ENCODE measurements at regions of chr10 and their contacts with region 1.

Region 1: GRCh38 chr10:34637418-34637911 is 177.6 kb downstream of the PARD3 start:
- H3K4me3 ChIP-seq: no peak overlapping the region
- H3K27ac ChIP-seq: no peak overlapping the region
- H3K4me1 ChIP-seq: no peaks in the 10 kb centered on the region
- CTCF ChIP-seq: peak; percentile 54

Region 2: GRCh38 chr10:34522546-34522945 is 114.9 kb before region 1 on chr10:
- CTCF ChIA-PET with region 1: interaction called, 13 read pairs
- POLR2A ChIA-PET with region 1: no interaction called
- H3K4me3 ChIP-seq: no peak overlapping the region
- H3K27ac ChIP-seq: no peak overlapping the region
- H3K4me1 ChIP-seq: peaks cover 10% of the 10 kb centered on the region
- CTCF ChIP-seq: no peak

Region 3: DNA sequence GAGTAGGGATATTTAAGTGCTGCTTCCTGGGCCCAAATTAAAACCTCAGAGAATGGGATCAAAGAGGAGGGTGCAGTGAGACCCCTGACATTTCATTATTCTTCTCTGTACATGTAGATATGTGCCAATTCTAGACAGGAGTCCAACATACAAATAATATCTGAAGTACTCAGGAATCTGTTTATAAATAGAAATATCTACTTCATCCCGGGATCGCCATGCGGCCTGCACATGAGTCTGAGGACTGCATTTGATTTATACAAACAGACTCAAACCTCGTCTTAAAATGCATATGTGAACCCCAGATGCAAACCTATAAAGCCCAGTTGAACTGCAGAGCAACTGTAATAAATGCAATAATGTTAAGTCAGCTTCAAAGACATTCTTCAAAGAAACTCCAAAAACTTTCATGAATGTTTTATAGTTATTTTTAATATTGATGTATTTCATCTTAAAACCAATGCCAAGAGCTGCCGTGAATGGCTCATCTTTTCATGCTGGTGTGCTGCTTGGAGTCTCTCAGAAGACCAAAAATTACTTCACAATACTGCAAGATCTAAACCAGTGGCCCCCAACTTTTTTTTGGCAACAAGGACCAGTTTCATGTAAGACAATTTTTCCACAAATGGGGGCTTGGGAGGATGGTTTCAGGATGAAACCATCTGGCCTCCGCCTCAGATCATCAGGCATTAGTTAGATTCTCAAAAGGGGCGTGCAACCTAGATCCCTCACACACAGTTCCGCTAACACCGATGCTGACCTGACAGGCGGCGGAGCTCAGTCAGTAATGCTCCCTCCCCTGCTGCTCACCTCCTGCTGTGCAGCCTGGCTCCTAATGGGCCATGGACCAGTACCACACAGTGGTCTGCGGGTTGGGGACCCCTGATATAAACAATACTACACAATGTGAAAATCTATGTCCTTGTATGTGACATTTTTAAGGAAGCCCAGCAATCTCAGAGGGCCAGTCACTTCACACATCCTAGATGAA is 10.7 kb after region 1 on chr10:
- CTCF ChIA-PET with region 1: interaction called, 13 read pairs
- POLR2A ChIA-PET with region 1: no interaction called
- H3K4me3 ChIP-seq: no peak overlapping the region
- H3K27ac ChIP-seq: no peak overlapping the region
- H3K4me1 ChIP-seq: peaks cover 2% of the 10 kb centered on the region; the same call in 1 of the 2 replicates
- CTCF ChIP-seq: no peak

Measured in HEK293 (cell line).